HEK293T (cell line): ENCODE measurements at regions of chr1 and their contacts with region 1.

Region 1: GRCh38 chr1:155244368-155245162 is 10.7 kb downstream of the ENTREP3 start:
- DNase-seq: peak; percentile 96

Region 2: GRCh38 chr1:155208541-155209311 is 35.8 kb before region 1 on chr1 and contains the start of gene MTX1:
- CTCF ChIA-PET with region 1: interaction called, 3 read pairs
- POLR2A ChIA-PET with region 1: interaction called, 19 read pairs
- DNase-seq: peak; percentile 90

Region 3: GRCh38 chr1:155261852-155262673 is 17.5 kb after region 1 on chr1 and contains the start of gene SCAMP3:
- CTCF ChIA-PET with region 1: interaction called, 5 read pairs
- POLR2A ChIA-PET with region 1: interaction called, 18 read pairs
- DNase-seq: peak; percentile 98

Region 4: DNA sequence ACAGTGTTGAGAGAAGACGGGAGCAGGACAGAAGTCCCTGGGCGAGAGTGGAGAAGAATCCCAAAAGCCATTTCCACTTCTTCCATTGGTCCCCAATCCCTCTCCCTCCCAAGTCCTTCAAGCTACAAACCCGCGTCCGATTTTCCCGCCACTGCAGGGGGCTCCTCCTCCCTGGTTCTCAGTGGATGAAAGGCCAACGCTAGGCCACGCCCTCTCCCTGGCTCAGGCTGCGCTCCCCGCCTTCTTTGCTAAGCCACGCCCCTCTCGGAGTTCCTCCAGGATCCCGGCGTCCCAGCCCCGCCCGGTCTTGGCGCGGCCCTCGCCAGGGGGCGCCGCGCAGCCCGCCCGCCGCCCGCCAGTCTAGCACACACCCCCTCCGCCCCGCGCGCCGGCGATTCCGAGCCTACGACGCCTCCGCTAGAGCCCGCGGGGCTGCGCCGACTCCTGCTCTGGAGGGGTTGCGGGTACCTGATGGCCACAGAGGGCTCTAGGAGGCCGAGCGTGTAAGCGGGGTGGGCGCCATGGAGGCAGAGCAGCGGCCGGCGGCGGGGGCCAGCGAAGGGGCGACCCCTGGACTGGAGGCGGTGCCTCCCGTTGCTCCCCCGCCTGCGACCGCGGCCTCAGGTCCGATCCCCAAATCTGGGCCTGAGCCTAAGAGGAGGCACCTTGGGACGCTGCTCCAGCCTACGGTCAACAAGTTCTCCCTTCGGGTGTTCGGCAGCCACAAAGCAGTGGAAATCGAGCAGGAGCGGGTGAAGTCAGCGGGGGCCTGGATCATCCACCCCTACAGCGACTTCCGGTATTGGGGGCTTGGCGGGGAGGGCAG is 32.7 kb after region 1 on chr1 and contains the start of gene HCN3:
- CTCF ChIA-PET with region 1: no interaction called
- POLR2A ChIA-PET with region 1: interaction called, 32 read pairs
- DNase-seq: peak; percentile 100